Mucosa of descending colon (tissue), 3 donors: ENCODE measurements at regions of chr17 and their contacts with region 1.

Region 1: DNA sequence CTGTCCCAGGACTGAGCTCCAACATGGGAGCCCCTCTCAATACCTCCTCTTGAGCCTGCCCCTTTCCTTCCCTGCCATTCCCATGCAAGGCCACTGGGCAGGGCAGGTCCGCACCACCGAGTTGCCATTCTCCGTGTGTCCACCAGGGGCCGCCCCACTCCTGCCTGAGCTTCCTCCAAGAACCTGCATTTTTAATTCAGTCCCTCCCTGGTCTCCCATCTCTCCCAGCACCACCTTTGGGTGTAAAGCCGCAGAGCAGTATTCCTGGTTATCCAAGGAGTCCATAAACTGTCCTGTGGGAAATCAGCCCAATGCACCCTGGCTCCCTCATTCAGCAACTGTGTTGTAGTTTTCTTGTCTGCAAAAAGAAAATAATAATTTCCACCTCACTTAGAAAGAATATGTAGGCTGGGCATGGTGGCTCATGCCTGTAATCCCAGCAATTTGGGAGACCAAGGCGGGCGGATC is 15.9 kb upstream of the ANKRD40CL start:
- DNase-seq: peak; percentile 87 to 92 (median 89)
- ATAC-seq: peak; percentile 99
- H3K4me3 ChIP-seq: no peak overlapping the region
- H3K4me1 ChIP-seq: no peaks in the 10 kb centered on the region
- CTCF ChIP-seq: peak; percentile 94

Region 2: GRCh38 chr17:50681263-50682210 is 101.7 kb before region 1 on chr17:
- intact Hi-C with region 1: no loop called
- DNase-seq: peak in 1 of 3 donors; percentile 71
- ATAC-seq: peak; percentile 34
- H3K4me3 ChIP-seq: no peak overlapping the region
- H3K4me1 ChIP-seq: peaks cover 35% of the 10 kb centered on the region
- CTCF ChIP-seq: no peak

Region 3: DNA sequence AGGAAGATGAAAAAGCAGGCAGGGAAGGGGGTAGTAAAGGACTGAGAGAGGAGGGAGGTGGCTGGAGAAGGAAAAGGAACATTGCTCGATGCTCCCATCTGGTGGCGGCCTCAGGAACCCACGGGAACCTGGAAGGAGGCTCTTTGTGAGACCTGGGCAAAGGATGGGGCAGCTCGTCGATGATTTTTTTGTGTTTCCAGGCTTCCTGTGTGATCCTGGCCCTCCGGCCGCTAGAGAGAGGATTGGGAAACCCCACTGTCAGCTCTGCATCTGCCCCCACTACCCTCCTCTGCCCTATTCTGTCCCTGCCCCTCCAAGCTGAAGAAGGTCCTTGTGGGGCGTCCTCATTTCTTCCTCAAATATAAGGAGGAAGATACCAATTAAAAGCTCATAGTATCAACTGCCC is 58.7 kb after region 1 on chr17:
- intact Hi-C with region 1: loop called (anchors 2 to 5 kb)
- DNase-seq: peak in 2 of 3 donors; percentile 86
- ATAC-seq: peak; percentile 89
- H3K4me3 ChIP-seq: no peak overlapping the region
- H3K4me1 ChIP-seq: peaks cover 5% of the 10 kb centered on the region
- CTCF ChIP-seq: peak; percentile 73

Region 4: GRCh38 chr17:50967795-50968194 is 184.6 kb after region 1 on chr17:
- intact Hi-C with region 1: loop called in 1 of 2 experiments (anchors 10 kb)
- DNase-seq: no peak
- ATAC-seq: no peak
- H3K4me3 ChIP-seq: no peak overlapping the region
- H3K4me1 ChIP-seq: no peaks in the 10 kb centered on the region
- CTCF ChIP-seq: no peak